ENCODE measurements at regions of chr2 and their contacts with region 1.

Region 1: DNA sequence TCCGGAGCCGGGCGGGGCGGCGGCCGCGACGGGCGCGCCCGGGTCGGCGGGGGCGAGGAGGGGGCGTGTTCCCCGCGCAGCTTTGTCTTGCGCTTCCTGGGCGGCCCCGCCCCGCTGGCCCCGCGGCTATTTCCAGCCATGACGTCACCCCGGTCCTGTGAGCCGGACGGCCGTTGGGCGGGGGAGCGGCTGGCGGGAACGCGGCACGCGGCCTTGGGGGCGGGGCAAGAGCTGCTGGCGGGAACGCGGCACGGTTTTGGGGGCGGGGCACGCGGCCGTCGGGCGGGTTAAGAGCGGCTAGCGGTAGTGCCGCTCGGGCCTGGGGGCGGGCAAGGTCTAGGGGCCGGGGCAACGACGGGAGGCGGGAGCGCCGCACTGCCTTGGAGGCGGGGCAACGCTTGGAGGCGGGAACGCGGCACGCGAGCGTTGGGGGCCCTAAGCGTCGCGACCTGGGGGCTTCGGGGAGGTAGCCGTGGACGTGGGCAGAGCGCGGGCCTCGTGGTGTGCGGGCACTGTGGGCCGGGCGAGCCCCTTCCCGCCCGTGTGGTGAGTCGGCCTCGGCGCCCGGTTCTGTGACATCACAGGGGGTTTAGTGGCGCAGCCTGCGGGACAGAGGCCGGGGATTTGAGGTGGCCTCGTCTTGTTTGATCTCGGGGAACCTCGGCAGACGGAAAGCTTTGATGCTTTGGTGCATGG is 704 bp downstream of the KLF11 start:
- DNase-seq: peak; percentile 95
- ATAC-seq: peak; percentile 81
- H3K4me3 Mint-ChIP-seq: peak overlapping the region; percentile 66
- H3K27ac Mint-ChIP-seq: peak overlapping the region; percentile 78
- H3K4me1 Mint-ChIP-seq: peaks cover 12% of the 10 kb centered on the region
- H3K27me3 Mint-ChIP-seq: peaks cover 3% of the 10 kb centered on the region

Region 2: GRCh38 chr2:9142551-9143263 is 901.3 kb before region 1 on chr2:
- CTCF ChIA-PET with region 1: no interaction called
- POLR2A ChIA-PET with region 1: no interaction called
- intact Hi-C with region 1: loop called in 1 of 2 experiments (anchors 2 kb)
- DNase-seq: peak; percentile 90
- ATAC-seq: peak; percentile 93
- H3K4me3 Mint-ChIP-seq: no peak overlapping the region
- H3K27ac Mint-ChIP-seq: no peak overlapping the region
- H3K4me1 Mint-ChIP-seq: no peaks in the 10 kb centered on the region
- H3K27me3 Mint-ChIP-seq: peaks cover 14% of the 10 kb centered on the region

Region 3: GRCh38 chr2:9799665-9800632 is 244.1 kb before region 1 on chr2:
- CTCF ChIA-PET with region 1: interaction called, 16 read pairs
- POLR2A ChIA-PET with region 1: interaction called, 3 read pairs
- intact Hi-C with region 1: loop called (anchors 1 to 5 kb)
- DNase-seq: peak; percentile 93
- ATAC-seq: peak; percentile 92
- H3K4me3 Mint-ChIP-seq: peak overlapping the region; percentile 39
- H3K27ac Mint-ChIP-seq: peak overlapping the region; percentile 86
- H3K4me1 Mint-ChIP-seq: peaks cover 24% of the 10 kb centered on the region
- H3K27me3 Mint-ChIP-seq: peaks cover 2% of the 10 kb centered on the region

Region 4: GRCh38 chr2:9951272-9951972 is 92.6 kb before region 1 on chr2 and contains the start of gene GRHL1:
- CTCF ChIA-PET with region 1: interaction called, 3 read pairs
- POLR2A ChIA-PET with region 1: no interaction called
- intact Hi-C with region 1: loop called (anchors 1 kb)
- DNase-seq: peak; percentile 95
- ATAC-seq: peak; percentile 98
- H3K4me3 Mint-ChIP-seq: peak within 1 kb of the TSS; percentile 68
- H3K27ac Mint-ChIP-seq: no peak within 1 kb of the TSS
- H3K4me1 Mint-ChIP-seq: peaks cover 4% of the 10 kb centered on the region
- H3K27me3 Mint-ChIP-seq: peaks cover 39% of the 10 kb centered on the region
- total RNA-seq, gene GRHL1: 0.27 to 0.53 TPM

Region 5: DNA sequence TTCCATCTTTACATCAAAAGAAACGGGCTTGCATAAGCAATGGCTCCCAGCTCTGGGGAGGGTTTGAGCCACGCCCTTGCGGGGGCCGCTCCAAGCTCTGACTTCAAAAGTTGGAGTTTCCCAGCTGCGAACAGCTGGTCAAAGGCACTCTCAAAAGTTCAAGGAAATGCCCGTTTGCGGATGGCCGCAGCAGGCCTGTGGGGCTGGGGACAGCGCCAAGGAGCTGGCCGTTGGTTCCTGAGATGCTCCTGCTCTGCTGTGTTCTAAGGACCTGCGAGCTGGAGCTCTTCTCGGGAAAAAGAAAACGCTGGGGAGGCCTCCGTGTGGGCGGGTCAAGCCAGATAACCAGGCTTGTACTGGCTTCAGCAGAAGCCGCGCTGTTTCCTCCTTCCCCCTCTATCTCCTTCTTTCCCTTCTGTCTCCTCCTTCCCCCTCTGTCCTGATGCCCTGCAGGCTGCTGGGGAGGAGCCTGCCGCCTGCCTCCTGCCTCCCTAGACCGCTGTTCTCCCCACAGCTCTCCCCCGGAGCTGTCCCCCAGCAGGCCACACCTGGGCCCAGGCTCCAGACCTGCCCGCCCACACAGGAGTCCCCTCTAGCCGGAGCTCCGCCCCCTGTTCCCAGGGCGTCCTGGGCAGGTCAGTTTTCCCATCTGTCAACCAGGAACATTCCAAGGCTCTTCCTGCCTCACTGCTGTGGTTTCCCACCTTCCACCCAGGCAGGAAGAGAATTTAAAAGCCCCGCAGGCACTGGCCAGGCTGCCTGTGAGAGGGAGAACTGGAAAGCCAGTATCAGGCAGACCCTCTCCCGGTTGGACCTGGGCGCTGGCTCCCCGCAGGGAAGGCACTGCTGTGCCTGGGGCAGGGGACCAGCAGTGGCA is 13.4 kb after region 1 on chr2:
- CTCF ChIA-PET with region 1: interaction called, 12 read pairs
- POLR2A ChIA-PET with region 1: no interaction called
- intact Hi-C with region 1: no loop called
- DNase-seq: peak; percentile 61
- ATAC-seq: peak; percentile 53
- H3K4me3 Mint-ChIP-seq: no peak overlapping the region
- H3K27ac Mint-ChIP-seq: no peak overlapping the region
- H3K4me1 Mint-ChIP-seq: peaks cover 5% of the 10 kb centered on the region
- H3K27me3 Mint-ChIP-seq: peaks cover 2% of the 10 kb centered on the region